H1 (cell line): ENCODE measurements at regions of chr16 and their contacts with region 1.

Region 1: DNA sequence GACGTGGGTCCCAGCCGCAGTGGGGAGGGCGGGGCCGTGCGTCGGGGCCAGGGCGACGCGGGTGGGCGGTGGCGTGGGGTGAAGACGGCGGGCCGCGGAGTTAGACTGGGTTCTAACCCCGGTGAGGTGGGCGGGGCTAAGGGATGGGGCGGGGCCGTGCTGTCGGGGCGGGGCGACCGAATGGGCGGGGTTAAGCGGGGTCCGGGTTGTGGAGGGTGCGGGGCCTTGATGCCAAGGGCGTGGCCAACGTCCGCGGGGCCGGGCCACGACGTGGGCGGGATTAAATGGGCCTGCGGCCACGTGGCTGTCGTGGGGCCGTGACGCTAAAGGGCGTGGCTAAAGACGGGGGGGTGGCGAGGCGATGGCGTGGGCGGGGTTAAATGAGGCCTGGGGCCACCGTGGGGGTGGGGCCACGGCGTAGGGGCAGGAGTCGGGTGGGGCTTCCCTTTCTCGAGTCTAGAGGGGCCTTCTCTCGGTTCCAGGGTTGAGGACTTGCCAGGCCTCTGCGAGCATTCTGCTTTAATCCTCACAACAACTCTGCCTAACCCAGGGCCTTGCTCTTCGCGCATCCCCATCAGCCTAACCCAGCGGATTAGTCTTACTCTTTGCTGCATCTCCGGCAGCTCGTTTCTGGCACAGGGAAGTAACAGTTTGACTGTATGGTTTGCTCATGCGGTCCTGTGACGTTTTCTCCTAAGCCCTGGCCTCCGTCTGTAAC is 739 bp downstream of the TCF25 start:
- DNase-seq: peak; percentile 92 to 98
- H3K4me3 ChIP-seq: peak overlapping the region; percentile 84 to 97 (median 90)
- H3K27ac ChIP-seq: peak overlapping the region; percentile 40; the same call in 1 of the 2 replicates
- H3K4me1 ChIP-seq: peaks cover 0 to 9% (median 2%) of the 10 kb centered on the region in 4 experiments; a peak in 4 of 7 replicates
- H3K27me3 ChIP-seq: no peaks in the 10 kb centered on the region
- CTCF ChIP-seq: no peak
- EP300 ChIP-seq: no peak
- POLR2A ChIP-seq: peak in 1 of 2 experiments; percentile 35; a peak in 1 of 3 replicates
- RAD21 ChIP-seq: no peak

Region 2: DNA sequence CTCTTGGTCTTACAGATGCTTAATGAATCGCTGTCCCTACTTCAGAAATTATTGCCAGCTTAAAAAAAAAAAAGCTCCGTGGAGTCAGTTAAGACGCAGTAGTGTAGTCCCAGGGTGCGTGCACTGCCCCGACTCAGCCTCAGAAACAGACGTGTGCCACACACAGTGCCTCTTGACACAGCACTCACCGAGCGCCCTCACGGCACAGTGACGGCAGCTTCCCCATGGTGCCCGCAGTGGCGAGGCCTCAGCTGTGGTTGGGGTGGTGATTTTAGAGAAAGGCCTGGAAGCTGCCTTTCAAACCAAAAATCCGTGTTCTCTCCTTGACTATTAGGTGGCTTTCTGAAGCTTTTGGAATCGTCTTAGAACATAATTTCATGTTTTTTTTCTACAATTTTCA is 13.1 kb after region 1 on chr16:
- CTCF ChIA-PET with region 1: interaction called, 3 read pairs
- POLR2A ChIA-PET with region 1: interaction called, 11 read pairs
- DNase-seq: no peak
- H3K4me3 ChIP-seq: no peak overlapping the region
- H3K27ac ChIP-seq: no peak overlapping the region
- H3K4me1 ChIP-seq: no peaks in the 10 kb centered on the region
- H3K27me3 ChIP-seq: no peaks in the 10 kb centered on the region
- CTCF ChIP-seq: no peak
- EP300 ChIP-seq: no peak
- POLR2A ChIP-seq: no peak
- RAD21 ChIP-seq: no peak

Region 3: DNA sequence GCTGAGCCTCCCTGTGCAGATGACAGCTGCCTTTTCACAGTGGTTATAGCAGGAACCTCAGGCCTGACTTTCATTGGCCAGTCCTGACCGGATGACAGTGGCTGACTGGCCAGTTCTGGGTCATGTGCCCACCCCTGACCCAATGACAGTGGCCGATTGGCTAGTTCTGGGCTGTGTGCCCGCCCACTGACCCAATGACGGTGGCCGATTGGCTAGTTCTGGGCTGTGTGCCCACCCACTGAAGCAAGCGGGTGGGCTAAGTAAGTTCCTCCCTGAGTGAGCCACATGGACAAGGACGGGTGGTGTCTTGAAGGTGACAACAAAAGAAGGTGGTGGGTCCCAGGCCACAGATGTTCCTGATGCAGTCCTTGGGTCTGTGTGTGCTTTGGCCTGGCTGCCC is 83.9 kb after region 1 on chr16:
- CTCF ChIA-PET with region 1: no interaction called
- POLR2A ChIA-PET with region 1: no interaction called
- DNase-seq: peak in 1 of 2 experiments; percentile 77
- H3K4me3 ChIP-seq: no peak overlapping the region
- H3K27ac ChIP-seq: no peak overlapping the region
- H3K4me1 ChIP-seq: peaks cover 0 to 3% (median 0%) of the 10 kb centered on the region in 4 experiments; a peak in 4 of 7 replicates
- H3K27me3 ChIP-seq: no peaks in the 10 kb centered on the region
- CTCF ChIP-seq: no peak
- EP300 ChIP-seq: no peak
- POLR2A ChIP-seq: no peak
- RAD21 ChIP-seq: no peak